CD4-positive, alpha-beta memory T cell (primary cell): ENCODE measurements at regions of chr17 and their contacts with region 1.

Region 1: DNA sequence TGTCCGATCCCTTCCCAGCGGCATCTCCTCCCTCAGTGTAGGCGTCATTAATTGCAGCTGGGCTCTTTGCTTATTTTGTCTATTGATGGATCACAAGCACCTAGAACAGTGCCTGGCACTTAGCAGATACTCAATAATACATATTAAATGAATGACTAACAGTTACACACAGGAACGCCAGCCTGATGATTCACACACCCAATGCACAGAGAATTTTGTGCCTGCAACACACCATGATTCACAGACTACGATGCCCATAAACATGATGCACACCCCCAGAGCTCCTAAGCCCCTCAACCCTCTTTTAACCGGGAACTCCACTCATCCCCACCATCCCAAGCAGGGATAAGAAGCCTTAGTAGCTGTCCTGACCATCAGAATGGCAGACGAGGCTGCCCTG is 66.6 kb upstream of the TMEM97 start:
- DNase-seq: no peak
- H3K4me3 ChIP-seq: no peak overlapping the region
- H3K4me3 Mint-ChIP-seq: peak overlapping the region in 3 of 8 donors; percentile 30 to 48 (median 38)
- H3K27ac ChIP-seq: no peak overlapping the region
- H3K27ac Mint-ChIP-seq: no peak overlapping the region
- H3K4me1 ChIP-seq: peaks cover 8% of the 10 kb centered on the region
- H3K4me1 Mint-ChIP-seq: peaks cover 5 to 8% (median 7%) of the 10 kb centered on the region in 4 donors
- H3K27me3 ChIP-seq: peaks cover 6% of the 10 kb centered on the region
- H3K27me3 Mint-ChIP-seq: peaks cover 5 to 6% of the 10 kb centered on the region in 2 donors

Region 2: GRCh38 chr17:27760069-27760885 is 492.2 kb before region 1 on chr17:
- CTCF ChIA-PET with region 1: interaction called, 13 read pairs
- POLR2A ChIA-PET with region 1: no interaction called
- intact Hi-C with region 1: no loop called
- DNase-seq: peak; percentile 40 to 63 (median 50)
- H3K4me3 ChIP-seq: no peak overlapping the region
- H3K4me3 Mint-ChIP-seq: no peak overlapping the region
- H3K27ac ChIP-seq: no peak overlapping the region
- H3K27ac Mint-ChIP-seq: no peak overlapping the region
- H3K4me1 ChIP-seq: no peaks in the 10 kb centered on the region
- H3K4me1 Mint-ChIP-seq: peaks cover 0 to 3% (median 0%) of the 10 kb centered on the region in 4 donors
- H3K27me3 ChIP-seq: no peaks in the 10 kb centered on the region
- H3K27me3 Mint-ChIP-seq: peaks cover 2 to 5% of the 10 kb centered on the region in 2 donors

Region 3: DNA sequence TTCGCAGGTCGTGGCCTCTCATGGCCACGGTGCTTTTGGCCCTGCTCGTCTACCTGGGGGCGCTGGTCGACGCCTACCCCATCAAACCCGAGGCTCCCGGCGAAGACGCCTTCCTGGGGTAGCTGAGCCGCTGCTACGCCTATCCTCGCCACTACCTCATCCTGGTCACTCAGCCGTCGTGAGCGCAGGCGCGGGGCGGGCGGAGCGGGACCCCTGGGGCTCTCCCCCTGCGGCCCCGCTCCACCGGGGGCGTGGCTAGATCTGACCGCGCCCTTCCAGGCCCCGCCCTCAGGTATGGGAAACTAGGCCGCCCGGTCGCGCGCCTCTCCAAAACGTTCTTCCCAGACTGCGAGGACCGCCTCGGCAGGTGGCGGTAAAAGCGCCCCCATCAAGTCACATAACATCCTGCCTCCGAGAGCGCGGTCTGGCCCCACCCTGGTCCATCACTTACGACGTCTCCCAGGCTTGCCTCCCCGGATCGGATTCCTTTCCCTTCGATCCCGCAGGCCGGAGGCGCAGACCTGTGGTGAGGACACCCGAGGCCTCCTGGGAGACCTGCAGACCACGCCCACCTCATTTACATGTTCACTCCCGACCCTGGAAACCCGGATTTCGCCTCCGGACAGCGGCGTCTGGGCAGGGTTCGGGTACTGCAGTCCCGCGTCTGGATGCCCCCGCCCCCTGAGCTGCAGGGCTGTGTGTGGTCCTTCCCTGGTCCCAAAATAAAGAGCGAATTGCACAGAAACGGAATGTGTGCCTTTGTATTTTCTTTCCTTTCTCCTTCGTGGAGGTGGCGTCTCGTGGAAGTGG is 24.9 kb before region 1 on chr17:
- CTCF ChIA-PET with region 1: interaction called, 14 read pairs
- POLR2A ChIA-PET with region 1: no interaction called
- intact Hi-C with region 1: no loop called
- DNase-seq: peak in 1 of 5 donors; percentile 13
- H3K4me3 ChIP-seq: peak overlapping the region in 1 of 2 donors; percentile 4
- H3K4me3 Mint-ChIP-seq: peak overlapping the region; percentile 35 to 85 (median 73)
- H3K27ac ChIP-seq: no peak overlapping the region
- H3K27ac Mint-ChIP-seq: no peak overlapping the region
- H3K4me1 ChIP-seq: peaks cover 10% of the 10 kb centered on the region
- H3K4me1 Mint-ChIP-seq: peaks cover 4 to 14% (median 10%) of the 10 kb centered on the region in 4 donors
- H3K27me3 ChIP-seq: peaks cover 19% of the 10 kb centered on the region
- H3K27me3 Mint-ChIP-seq: peaks cover 35 to 37% of the 10 kb centered on the region in 2 donors

Region 4: DNA sequence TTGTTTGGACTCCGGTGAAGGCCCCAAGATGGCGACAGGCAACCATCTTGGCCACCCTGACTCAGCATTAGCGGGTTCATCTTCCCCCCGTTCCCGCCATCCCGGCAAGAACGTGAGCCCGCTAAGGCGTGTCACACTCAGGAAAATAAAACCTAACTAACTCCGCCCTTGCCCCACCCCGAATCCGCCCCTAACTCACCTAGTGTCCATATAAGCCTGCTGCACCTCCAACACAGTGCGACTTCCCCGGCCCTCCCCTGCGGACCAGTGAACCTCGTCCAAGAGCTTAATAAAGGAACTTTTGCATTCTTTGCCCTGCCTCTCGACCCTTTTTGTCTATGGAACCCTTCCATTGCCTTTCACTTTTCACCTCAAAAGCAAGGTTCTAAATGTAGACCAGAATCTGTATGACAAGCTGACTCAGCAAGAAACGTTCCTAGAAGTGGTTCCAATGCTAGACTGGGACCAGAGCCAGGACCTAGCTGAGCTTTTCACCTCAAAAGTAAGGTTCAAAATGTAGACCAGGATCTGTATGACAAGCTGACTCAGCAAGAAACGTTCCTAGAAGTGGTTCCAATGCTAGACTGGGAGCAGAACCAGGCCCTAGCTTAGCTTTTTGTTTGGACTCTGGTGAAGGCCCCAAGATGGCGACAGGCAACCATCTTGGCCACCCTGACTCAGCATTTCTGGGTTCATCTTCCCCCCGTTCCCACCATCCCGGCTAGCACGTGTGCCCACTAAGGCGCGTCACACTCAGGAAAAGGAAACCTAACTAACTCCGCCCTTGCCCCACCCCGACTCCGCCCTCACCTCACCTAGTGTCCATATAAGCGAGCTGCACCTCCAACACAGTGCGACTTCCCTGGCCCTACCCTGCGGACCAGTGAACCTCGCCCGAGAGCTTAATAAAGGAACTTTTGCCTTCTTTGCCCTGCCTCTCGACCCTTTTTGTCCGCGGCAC is 13.4 kb after region 1 on chr17:
- CTCF ChIA-PET with region 1: interaction called, 15 read pairs
- POLR2A ChIA-PET with region 1: no interaction called
- intact Hi-C with region 1: no loop called
- DNase-seq: no peak
- H3K4me3 ChIP-seq: no peak overlapping the region
- H3K4me3 Mint-ChIP-seq: no peak overlapping the region
- H3K27ac ChIP-seq: no peak overlapping the region
- H3K27ac Mint-ChIP-seq: no peak overlapping the region
- H3K4me1 ChIP-seq: no peaks in the 10 kb centered on the region
- H3K4me1 Mint-ChIP-seq: no peaks in the 10 kb centered on the region
- H3K27me3 ChIP-seq: no peaks in the 10 kb centered on the region
- H3K27me3 Mint-ChIP-seq: peaks cover 1 to 9% of the 10 kb centered on the region in 2 donors

Region 5: GRCh38 chr17:28276011-28276410 is 23.6 kb after region 1 on chr17:
- CTCF ChIA-PET with region 1: interaction called, 10 read pairs
- POLR2A ChIA-PET with region 1: no interaction called
- intact Hi-C with region 1: no loop called
- DNase-seq: no peak
- H3K4me3 ChIP-seq: no peak overlapping the region
- H3K4me3 Mint-ChIP-seq: no peak overlapping the region
- H3K27ac ChIP-seq: no peak overlapping the region
- H3K27ac Mint-ChIP-seq: no peak overlapping the region
- H3K4me1 ChIP-seq: peaks cover 16% of the 10 kb centered on the region
- H3K4me1 Mint-ChIP-seq: peaks cover 10 to 23% (median 17%) of the 10 kb centered on the region in 4 donors
- H3K27me3 ChIP-seq: peaks cover 14% of the 10 kb centered on the region
- H3K27me3 Mint-ChIP-seq: peaks cover 25 to 26% of the 10 kb centered on the region in 2 donors